Posterior vena cava (tissue), 2 donors: ENCODE measurements at regions of chrX and their contacts with region 1.

Region 1: GRCh38 chrX:30649859-30650258 is 3.4 kb upstream of the GK start:
- DNase-seq: no peak

Region 2: GRCh38 chrX:30702736-30703135 is 52.9 kb after region 1 on chrX:
- intact Hi-C with region 1: loop called in 1 of 2 experiments (anchors 2 kb)
- DNase-seq: no peak

Region 3: GRCh38 chrX:30713061-30713525 is 63.2 kb after region 1 on chrX:
- intact Hi-C with region 1: no loop called
- DNase-seq: no peak